Activated CD4-positive, alpha-beta T cell treated with anti-CD3 and anti-CD28 coated beads, Interleukin-2, amount 10 ng/mL, durations not matched to agents 24 days and 14 days (primary cell): ENCODE measurements at regions of chr10 and their contacts with region 1.

Region 1: DNA sequence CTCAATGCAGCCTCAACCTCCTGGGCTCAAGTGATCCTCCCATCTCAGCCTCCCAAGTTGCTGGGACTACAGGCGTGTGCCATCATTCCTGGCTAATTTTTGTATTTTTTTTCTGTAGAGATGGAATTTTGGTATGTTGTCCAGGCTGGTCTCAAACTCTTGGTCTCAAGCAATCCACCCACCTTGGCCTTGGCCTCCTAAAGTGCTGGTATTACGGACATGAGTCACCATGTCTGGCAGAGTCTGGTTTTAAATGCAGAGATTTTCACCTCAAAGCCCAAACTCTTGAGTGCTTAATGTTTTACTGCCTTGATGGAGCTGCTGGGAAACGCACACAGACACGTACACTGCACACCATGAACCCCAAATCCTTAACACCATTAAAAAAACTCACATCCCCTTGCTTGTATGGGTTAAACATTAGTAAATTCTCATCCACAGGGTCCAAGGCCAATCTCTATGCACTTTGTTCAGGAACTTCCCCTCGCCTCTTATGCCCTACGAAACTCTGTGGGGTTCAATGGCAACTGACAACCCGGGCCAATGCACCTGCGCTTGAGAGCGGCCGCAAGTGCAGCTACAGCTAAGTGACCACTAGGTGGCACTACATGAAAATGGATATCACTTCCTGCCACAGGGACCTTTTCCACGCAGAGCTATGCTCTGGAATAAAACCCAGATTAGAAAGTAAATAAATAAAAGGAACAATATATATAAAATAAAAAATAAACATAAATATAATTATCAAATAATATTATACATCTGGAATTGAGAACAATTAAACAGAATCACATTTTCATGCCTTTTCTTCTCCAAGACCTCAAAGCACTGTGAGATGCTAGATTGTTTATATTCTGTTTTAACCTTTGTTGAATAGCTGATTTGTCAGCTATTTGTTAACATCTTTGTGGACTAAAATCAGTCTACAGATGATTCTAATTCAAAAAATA is 66.9 kb upstream of the AFAP1L2 start:
- DNase-seq: peak; percentile 90
- H3K4me3 Mint-ChIP-seq: no peak overlapping the region
- H3K27ac Mint-ChIP-seq: no peak overlapping the region
- H3K4me1 Mint-ChIP-seq: peaks cover 20% of the 10 kb centered on the region
- H3K27me3 Mint-ChIP-seq: no peaks in the 10 kb centered on the region

Region 2: DNA sequence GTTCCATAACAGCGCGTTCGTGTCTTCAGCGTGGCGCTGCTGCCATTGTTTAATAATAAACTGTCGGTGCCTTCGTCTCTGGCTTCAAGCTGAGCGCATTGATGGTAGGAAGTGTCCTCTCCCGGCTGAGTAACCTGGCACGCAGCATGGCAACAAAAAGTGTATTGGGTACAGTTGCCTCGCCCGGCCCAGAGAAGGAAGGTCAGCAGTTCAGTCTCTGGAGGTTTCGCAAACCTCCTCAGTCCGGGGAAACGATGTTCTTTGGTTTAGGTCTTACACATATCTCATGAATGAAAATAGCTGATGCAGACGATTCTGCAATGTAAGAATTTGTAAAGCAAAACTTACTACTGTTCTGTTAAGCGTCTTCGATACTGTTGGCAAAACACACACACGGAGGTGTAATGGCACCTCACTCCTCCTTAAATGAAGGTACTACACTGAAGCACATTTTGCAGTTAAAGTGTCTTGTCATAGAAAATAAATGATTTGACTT is 296.5 kb before region 1 on chr10:
- intact Hi-C with region 1: no loop called
- DNase-seq: no peak
- H3K4me3 Mint-ChIP-seq: peak overlapping the region; percentile 100
- H3K27ac Mint-ChIP-seq: peak overlapping the region; percentile 86
- H3K4me1 Mint-ChIP-seq: peaks cover 22% of the 10 kb centered on the region
- H3K27me3 Mint-ChIP-seq: peaks cover 23% of the 10 kb centered on the region

Region 3: GRCh38 chr10:114499630-114500190 is 28.5 kb after region 1 on chr10:
- intact Hi-C with region 1: loop called (anchors 1 kb)
- DNase-seq: peak; percentile 87
- H3K4me3 Mint-ChIP-seq: peak overlapping the region; percentile 64
- H3K27ac Mint-ChIP-seq: peak overlapping the region; percentile 89
- H3K4me1 Mint-ChIP-seq: peaks cover 63% of the 10 kb centered on the region
- H3K27me3 Mint-ChIP-seq: no peaks in the 10 kb centered on the region

Region 4: DNA sequence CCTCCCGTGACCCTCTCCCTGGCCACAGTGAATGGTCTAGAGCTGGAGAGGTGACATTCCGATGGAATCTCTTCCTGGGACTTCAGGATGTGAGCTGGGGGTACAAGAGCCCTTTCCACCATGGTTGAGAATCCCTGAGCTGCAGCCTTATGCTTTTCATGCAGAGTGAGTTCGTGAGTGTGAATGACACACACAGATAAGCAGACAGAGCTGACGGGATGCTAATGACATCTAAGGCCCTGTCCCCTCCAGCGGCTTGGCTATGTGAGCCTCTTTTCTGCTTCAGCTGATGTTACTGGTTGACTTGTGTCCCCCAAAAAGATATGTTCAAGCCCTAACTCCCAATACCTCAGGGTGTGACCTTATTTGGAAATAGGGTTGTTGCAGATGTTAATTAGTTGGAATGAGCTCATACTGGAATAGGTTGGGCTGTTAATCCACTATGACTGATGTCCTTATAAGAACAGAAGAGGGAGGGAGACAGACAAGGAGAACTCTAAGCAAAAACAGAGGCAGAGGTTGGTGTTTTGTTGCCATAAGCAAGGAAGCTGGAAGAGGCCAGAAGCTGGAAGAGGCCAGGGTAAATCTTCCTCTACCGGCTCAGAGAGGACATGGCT is 44.2 kb after region 1 on chr10:
- intact Hi-C with region 1: no loop called
- DNase-seq: no peak
- H3K4me3 Mint-ChIP-seq: peak overlapping the region; percentile 38
- H3K27ac Mint-ChIP-seq: no peak overlapping the region
- H3K4me1 Mint-ChIP-seq: peaks cover 71% of the 10 kb centered on the region
- H3K27me3 Mint-ChIP-seq: no peaks in the 10 kb centered on the region

Region 5: DNA sequence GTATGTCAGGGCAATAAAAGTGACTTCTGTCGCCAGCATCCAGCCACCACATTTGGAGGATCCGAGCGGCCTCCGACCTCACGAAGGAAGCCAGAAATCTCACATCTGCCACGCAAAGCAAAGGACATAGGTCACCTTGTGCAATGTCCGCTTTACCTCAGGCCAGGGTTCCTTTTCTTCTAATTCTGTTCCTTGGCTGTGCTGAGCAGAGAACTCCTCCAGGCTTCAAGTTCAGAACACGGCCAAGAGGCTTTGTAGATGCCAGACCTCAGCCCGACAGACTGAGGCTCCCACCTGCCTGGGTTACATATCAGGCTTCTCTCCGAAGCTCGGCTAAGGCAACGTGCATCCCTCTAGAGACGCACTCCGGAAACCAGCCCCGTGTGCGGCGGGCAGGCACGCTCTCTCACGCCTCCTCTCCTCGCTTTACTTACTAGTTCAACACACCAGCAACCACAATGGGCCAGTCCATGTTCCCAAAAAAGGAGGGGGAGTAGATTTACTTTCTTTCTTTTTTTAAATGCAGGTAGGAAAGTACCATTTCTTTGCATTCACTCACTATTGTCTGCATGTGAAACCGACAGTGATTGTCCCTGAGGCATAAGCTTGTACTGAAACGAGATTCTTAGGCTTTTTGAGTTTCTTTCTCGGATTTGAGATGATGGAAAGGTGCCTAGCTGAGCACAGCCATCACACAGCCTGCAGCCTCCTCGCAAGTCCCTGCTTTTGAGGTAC is 55.4 kb after region 1 on chr10:
- intact Hi-C with region 1: loop called (anchors 1 kb)
- DNase-seq: peak; percentile 97
- H3K4me3 Mint-ChIP-seq: peak overlapping the region; percentile 78
- H3K27ac Mint-ChIP-seq: peak overlapping the region; percentile 97
- H3K4me1 Mint-ChIP-seq: peaks cover 53% of the 10 kb centered on the region
- H3K27me3 Mint-ChIP-seq: no peaks in the 10 kb centered on the region

Region 6: DNA sequence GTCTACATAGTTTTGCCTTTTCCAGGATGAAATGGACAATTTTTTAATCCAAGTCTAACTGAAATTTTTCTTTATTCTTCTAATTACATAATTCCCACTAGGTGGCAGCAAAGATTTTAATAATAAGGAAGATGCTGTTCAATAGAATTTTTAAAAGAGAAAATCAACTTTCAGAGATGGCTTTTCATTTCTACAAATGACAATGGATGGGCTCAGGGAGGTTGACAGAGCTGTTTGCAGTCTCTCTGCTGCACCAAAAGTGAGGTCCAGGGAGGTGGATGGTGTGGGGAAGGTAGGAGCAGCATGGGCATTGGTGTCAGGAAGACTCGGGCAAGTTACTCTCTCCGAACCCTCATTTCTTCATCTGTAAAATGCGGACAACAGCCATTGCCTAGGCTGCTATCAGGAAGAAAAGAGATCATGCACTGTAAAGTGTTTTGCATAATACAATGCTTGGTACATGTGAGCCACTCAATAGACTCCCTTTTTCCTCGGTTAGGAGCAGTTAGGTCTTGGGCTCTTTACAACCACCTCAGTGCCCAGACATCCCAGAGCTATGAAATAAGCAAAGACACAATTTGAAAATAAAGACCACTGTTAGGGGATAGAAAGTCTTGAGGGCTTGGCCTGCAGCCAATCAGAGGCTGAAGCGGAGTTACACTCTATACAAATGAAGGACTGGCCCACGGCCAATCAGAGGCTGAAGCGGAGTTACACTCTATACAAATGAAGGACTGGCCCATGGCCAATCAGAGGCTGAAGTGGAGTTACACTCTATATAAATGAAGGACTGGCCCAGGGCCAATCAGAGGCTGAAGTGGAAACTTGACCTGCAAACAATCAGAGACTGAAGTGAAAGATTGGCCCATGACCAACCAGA is 79.8 kb after region 1 on chr10:
- intact Hi-C with region 1: loop called (anchors 1 kb)
- DNase-seq: no peak
- H3K4me3 Mint-ChIP-seq: no peak overlapping the region
- H3K27ac Mint-ChIP-seq: no peak overlapping the region
- H3K4me1 Mint-ChIP-seq: peaks cover 18% of the 10 kb centered on the region
- H3K27me3 Mint-ChIP-seq: peaks cover 2% of the 10 kb centered on the region

Region 7: DNA sequence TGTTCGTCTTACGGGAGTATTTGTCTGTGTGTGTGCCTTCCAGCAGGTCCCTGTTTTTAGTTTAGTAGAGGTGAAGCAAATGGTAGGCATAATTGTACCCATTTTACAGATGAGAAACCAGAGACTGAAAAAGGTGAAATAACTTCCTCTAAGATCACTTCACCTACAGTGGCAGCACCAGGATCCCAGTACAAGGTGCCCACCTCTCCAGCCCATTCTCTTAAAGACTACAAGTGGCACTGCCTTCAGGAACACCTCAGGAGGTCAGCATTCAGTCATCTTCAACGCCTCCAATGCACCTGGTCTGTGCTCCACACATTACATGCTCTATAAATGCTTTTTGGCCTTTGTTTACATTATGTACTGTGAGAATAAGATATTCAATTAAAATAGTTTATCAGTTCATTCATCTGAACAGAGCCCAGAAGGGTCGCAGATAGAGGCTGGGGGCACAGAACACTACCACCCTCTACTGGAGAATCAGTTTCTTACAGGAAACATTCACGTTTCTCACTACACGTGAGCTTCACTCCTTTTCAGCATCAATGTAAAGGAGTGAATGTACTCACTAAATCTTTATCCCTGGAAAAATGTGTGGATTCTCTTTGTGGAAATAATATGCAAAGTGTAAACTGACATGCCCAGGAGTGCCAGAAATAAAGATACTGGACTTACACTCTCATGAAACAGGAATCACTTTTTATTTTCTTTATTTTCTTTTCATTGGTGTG is 232.3 kb after region 1 on chr10:
- intact Hi-C with region 1: loop called (anchors 5 kb)
- DNase-seq: peak; percentile 65
- H3K4me3 Mint-ChIP-seq: no peak overlapping the region
- H3K27ac Mint-ChIP-seq: no peak overlapping the region
- H3K4me1 Mint-ChIP-seq: no peaks in the 10 kb centered on the region
- H3K27me3 Mint-ChIP-seq: peaks cover 34% of the 10 kb centered on the region

Region 8: GRCh38 chr10:114783686-114784085 is 312.5 kb after region 1 on chr10:
- intact Hi-C with region 1: loop called (anchors 2 kb)
- DNase-seq: peak; percentile 21
- H3K4me3 Mint-ChIP-seq: no peak overlapping the region
- H3K27ac Mint-ChIP-seq: no peak overlapping the region
- H3K4me1 Mint-ChIP-seq: peaks cover 10% of the 10 kb centered on the region
- H3K27me3 Mint-ChIP-seq: peaks cover 1% of the 10 kb centered on the region

Region 9: DNA sequence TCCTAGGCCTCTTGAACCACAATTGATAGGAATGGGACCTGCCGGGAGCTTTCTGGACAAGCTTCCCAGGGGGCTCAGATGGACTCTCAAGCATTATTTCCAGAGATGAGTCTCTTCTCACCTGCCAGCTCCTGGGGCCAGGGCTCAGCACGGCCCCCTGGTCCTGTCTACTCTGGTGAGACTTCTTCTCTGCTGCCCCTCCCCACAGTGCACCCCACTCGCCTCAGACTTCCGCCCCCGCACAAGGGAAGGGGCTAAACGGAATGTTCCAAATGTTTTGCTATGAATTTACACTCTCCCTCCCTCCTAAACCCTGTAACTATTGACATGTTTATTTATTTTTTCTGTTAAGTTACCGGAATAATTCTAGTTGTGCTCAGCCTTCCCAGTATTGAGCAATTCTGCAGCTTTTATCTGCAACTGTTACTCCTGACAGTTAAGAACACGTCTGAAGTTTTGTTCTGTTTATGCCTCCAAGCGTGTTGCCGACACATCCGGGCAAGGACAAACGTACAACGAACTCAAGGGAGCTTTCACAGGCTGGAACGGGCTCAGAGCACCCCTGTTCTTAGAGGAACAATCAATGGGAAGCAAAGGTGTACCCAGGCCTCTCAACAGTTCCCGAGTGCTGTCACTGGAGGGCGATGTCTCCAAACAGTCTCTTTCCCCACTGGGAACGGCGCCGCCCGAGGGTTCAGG is 405.5 kb after region 1 on chr10:
- intact Hi-C with region 1: loop called (anchors 5 kb)
- DNase-seq: peak; percentile 82
- H3K4me3 Mint-ChIP-seq: no peak overlapping the region
- H3K27ac Mint-ChIP-seq: no peak overlapping the region
- H3K4me1 Mint-ChIP-seq: peaks cover 26% of the 10 kb centered on the region
- H3K27me3 Mint-ChIP-seq: peaks cover 34% of the 10 kb centered on the region